ENCODE measurements at regions of chr19 and their contacts with region 1.

Region 1: DNA sequence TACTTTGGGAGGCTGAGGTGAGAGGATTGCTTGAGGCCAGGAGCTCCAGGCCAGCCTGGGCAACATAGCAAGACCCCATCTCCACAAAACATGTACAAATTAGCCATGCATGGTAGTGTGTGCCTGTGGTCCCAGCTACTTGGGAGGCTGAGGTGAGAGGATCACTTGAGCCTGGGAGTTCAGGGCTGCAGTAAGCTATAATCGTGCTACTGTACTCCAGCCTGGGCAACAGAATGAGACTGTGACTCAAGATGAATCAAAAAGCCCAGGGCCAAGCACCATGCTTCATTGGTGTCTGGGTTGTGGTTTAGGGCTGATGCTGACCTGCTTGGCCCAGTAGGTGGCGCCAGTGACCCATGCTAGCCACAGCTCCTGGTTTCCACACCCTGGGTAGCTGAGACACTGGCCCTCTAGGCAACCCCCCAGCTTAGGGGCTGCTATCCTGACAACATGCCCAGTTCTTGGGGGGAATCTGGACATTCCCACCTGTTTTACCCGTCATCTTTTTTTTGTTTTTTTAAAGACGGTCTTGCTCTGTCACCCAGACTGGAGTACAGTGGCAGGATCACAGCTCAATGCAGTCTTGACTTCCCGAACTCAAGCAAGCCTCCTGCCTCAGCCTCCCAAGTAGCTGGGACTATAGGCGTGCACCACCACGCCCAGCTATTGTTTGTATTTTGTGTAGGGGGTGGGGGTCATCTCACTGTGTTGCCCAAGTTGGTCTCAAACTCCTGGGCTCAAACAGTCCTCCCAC is 5.5 kb downstream of the CCDC124 start:
- DNase-seq: peak; percentile 90
- H3K4me3 ChIP-seq: no peak overlapping the region
- H3K27ac ChIP-seq: no peak overlapping the region
- H3K4me1 ChIP-seq: peaks cover 11% of the 10 kb centered on the region
- H3K27me3 ChIP-seq: no peaks in the 10 kb centered on the region
- CTCF ChIP-seq: peak; percentile 93 to 99

Region 2: DNA sequence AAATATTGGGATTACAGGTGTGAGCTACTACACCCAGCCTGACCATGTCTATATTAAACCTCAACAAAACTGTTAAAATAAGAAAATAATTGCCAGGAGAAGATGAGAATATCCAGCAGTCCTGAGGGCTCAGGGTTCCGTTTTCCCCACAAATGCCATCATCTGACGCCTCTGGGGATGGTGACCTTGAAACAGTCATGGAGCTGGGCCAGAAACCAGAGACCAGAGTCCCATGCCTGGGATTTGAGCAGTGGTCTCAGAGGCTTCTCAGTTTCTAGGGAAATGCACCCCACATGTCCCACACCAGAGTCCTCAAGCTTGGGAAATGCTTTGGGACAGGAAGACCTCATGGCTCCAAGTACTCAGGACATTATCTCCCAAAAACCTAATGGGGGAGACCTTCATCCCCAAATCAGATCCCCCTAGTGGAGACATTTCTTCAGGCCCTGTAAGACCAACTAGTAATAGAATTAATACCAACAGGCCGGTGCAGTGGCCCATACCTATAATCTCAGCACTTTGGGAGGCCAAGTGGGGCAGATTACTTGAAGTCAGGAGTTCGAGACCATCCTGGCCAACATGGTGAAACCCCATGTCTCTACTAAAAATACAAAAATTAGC is 221.8 kb before region 1 on chr19:
- CTCF ChIA-PET with region 1: no interaction called
- dilution Hi-C with region 1: no loop called
- in situ Hi-C with region 1: no loop called
- intact Hi-C with region 1: no loop called
- DNase-seq: no peak
- H3K4me3 ChIP-seq: no peak overlapping the region
- H3K27ac ChIP-seq: no peak overlapping the region
- H3K4me1 ChIP-seq: peaks cover 21% of the 10 kb centered on the region
- H3K27me3 ChIP-seq: no peaks in the 10 kb centered on the region
- CTCF ChIP-seq: peak; percentile 4 to 12

Region 3: GRCh38 chr19:17985037-17985818 is 47.0 kb after region 1 on chr19:
- CTCF ChIA-PET with region 1: no interaction called
- dilution Hi-C with region 1: no loop called
- in situ Hi-C with region 1: loop called in 1 of 2 experiments (anchors 5 kb)
- intact Hi-C with region 1: no loop called
- DNase-seq: no peak
- H3K4me3 ChIP-seq: no peak overlapping the region
- H3K27ac ChIP-seq: no peak overlapping the region
- H3K4me1 ChIP-seq: no peaks in the 10 kb centered on the region
- H3K27me3 ChIP-seq: no peaks in the 10 kb centered on the region
- CTCF ChIP-seq: no peak